BJ (cell line): ENCODE measurements at regions of chr20 and their contacts with region 1.

Region 1: DNA sequence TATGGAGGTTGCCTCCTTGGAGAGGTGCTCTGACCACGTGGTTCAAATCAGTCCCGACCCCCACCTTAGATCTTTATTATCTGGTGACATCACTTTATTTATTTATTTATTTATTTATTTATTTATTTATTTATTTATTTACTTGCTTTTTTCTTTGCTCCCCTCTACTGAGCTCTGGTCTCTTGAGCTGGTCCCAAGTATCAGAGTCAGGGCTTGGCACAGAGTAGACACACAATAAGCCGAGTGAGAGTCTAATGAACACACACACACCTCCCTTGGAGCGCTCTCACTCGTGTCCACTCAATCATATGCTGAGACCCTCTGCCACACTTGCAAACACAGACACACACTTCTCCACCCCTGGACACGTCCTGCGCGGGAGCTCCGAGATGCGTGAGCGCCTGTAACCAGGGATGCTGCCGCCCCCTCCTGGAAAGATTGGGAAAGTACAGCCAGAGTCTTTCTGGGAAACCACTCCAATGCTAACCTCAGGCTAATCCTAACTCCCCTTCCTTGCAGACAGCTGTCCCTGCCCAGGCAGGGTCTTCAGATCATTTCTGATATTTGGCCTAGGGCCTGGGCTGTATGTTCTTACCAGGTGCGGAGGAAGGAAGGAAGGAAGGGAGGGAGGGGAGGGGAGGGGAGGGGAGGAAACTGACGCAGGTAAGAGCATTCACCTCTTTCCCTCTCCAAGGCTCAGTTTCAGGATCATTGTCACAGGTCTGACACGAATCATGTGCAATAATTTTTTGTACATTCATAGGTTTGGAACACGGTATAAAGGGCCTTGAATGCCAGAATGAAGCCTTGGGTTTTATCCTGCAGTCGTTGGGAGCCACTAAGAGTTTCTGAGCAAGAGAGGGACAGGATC is 70.9 kb downstream of the STK35 start:
- DNase-seq: no peak
- H3K4me3 ChIP-seq: no peak overlapping the region
- H3K27me3 ChIP-seq: peaks cover 3% of the 10 kb centered on the region
- CTCF ChIP-seq: peak; percentile 92

Region 2: GRCh38 chr20:1764136-1765033 is 408.2 kb before region 1 on chr20:
- CTCF ChIA-PET with region 1: interaction called, 18 read pairs
- POLR2A ChIA-PET with region 1: no interaction called
- DNase-seq: peak; percentile 31
- H3K4me3 ChIP-seq: no peak overlapping the region
- H3K27me3 ChIP-seq: peaks cover 1% of the 10 kb centered on the region; the same call in 1 of the 2 replicates
- CTCF ChIP-seq: peak; percentile 85

Region 3: DNA sequence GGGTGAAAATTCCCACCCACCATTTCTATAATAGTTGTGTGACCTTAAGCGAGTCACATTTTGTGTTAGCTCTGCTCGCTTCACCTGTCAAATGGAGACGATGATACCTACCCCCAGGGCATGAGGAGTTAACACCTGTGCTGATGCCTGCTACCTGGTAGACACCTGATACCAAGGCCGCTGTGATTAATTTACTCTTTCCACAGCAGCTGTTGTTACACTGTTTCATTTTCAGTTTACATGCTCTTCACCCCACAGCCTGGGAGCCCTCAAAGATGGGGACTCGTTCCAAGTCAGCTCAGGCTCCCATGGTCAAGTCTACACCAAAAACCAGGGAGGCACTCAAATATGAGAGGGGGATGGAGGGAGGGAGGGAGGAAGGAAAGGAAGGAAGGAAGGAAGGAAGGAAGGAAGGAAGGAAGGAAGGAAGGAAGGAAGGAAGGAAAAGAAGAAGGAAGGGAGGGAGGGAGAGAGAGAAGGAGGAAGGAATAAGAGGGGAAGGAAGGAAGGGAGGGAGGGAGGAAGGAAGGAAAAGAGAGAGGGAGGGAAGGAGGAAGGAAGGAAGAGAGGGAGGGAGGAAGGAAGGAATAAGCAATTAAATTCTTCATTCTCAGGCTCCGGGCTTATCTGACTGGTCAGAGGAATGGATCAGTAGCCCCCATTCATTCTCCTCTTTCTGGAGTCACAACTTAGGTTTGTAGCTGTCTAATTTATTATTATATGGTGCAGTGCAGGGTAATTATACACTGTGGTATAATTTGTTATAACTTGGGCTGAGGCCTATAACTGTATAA is 219.6 kb before region 1 on chr20:
- CTCF ChIA-PET with region 1: interaction called, 5 read pairs
- POLR2A ChIA-PET with region 1: interaction called, 12 read pairs
- DNase-seq: no peak
- H3K4me3 ChIP-seq: no peak overlapping the region
- H3K27me3 ChIP-seq: peaks cover 9% of the 10 kb centered on the region
- CTCF ChIP-seq: no peak

Region 4: GRCh38 chr20:1965520-1966351 is 206.8 kb before region 1 on chr20:
- CTCF ChIA-PET with region 1: interaction called, 103 read pairs
- POLR2A ChIA-PET with region 1: no interaction called
- DNase-seq: no peak
- H3K4me3 ChIP-seq: no peak overlapping the region
- H3K27me3 ChIP-seq: peaks cover 23% of the 10 kb centered on the region
- CTCF ChIP-seq: peak; percentile 94

Region 5: DNA sequence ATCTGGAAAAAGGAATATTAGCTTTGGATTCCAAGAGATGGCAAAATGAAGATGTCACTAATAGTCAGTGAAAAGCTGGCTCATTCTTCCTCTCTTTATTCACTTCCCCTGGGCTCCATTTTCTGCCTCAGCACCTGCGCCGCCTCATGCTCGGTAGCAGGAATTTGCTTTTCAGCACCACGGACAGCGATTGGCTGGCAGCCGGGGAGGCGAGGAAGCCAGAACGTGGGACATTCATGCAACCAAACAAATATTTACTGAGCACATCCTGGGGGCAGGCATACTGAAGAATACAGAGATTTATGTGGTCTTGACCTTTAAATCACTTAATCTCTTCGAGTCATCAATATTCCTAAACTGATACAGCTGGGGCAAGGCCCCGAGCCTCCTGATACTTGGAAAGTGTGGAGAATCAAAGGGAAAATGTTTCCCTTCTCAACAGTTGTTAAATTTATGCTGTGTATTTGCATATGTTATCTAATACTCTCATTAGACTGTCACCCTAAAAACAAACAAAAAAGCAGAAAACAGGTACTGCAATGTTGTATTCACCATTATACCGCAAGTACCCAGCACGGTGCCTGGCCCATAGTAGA is 166.6 kb before region 1 on chr20:
- CTCF ChIA-PET with region 1: interaction called, 120 read pairs
- POLR2A ChIA-PET with region 1: no interaction called
- DNase-seq: no peak
- H3K4me3 ChIP-seq: no peak overlapping the region
- H3K27me3 ChIP-seq: 0 out of 2 replicates have a peak, but pooled peaks cover 2% of the 10 kb centered on the region
- CTCF ChIP-seq: 0 out of 2 replicates have a peak, but pooled peaks have one; percentile 2

Region 6: DNA sequence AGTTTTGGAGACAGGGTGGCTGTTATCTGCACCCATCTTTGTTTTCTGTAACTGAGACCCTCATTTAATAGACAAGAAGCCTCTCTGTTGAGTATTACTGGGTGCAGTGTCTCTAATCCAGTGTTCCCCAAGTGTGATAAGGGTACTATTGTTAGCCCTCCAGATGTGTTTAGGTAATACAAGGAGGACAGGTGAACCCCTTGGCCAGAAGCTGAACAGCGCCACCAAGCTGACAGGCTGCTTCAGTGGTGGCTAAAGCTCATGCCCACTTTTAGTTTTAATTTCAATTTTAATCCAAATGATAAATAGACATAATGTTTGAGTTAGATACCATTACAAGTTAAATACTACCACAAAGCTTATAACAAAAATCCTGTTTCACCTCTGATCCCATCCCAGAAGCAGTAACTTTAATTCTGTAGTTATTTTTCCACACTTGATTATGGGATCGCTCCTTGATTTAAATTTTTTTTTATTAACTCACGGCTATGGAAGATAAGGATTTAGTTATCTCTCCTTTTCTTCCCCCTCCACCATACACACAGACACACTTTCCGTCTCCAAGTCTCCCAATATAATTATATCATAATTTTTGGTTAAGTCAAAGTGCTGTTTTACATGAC is 79.3 kb before region 1 on chr20:
- CTCF ChIA-PET with region 1: interaction called, 10 read pairs
- POLR2A ChIA-PET with region 1: no interaction called
- DNase-seq: no peak
- H3K4me3 ChIP-seq: no peak overlapping the region
- H3K27me3 ChIP-seq: peaks cover 13% of the 10 kb centered on the region
- CTCF ChIP-seq: peak; percentile 46

Region 7: DNA sequence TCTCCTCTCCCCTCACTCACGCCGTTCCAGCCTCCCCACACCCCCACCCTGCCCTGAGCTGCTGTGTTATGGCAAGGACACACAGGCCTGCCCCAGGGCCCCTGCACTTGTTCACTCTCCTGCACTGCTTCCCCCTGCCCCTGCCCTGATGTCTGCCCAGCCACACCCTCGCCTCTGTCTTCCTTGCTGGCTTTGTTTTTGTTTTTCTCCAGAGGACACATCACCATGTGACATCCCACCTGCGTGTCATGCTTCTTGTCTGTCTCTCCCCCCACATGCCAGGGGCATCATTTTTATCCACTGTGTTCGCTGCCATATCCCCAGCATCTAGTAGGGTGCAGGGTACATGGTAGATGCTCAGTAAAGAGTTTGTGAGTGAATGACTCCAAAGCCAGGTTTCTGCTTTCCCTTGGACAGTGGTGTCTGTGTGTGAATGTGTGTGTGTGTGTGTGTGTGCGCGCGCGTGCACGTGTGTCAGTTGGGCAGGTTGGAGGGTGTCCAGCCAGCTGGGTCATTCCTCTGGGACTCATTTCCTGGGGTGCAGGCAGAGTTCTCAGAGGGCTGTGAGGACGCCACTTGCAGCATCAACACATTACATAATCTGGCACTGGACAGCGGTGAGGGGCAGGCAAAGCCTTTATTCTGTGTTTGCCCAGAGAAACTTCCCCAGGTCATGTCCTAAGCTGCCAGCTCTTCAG is 10.3 kb before region 1 on chr20:
- CTCF ChIA-PET with region 1: interaction called, 25 read pairs
- POLR2A ChIA-PET with region 1: no interaction called
- DNase-seq: no peak
- H3K4me3 ChIP-seq: no peak overlapping the region
- H3K27me3 ChIP-seq: peaks cover 7% of the 10 kb centered on the region
- CTCF ChIP-seq: no peak